Brain microvascular endothelial cell (primary cell): ENCODE measurements at regions of chr5 and their contacts with region 1.

Region 1: GRCh38 chr5:87393331-87393730 is 19.4 kb downstream of the CCNH start:
- DNase-seq: no peak
- H3K4me3 ChIP-seq: no peak overlapping the region
- H3K27ac ChIP-seq: peak overlapping the region; percentile 90
- H3K27me3 ChIP-seq: no peaks in the 10 kb centered on the region
- CTCF ChIP-seq: no peak

Region 2: GRCh38 chr5:87069974-87070624 is 323.2 kb before region 1 on chr5:
- in situ Hi-C with region 1: loop called (anchors 25 kb)
- DNase-seq: peak; percentile 64
- H3K4me3 ChIP-seq: no peak overlapping the region
- H3K27ac ChIP-seq: no peak overlapping the region
- H3K27me3 ChIP-seq: no peaks in the 10 kb centered on the region
- CTCF ChIP-seq: peak; percentile 69